B cell (primary cell): ENCODE measurements at regions of chr11 and their contacts with region 1.

Region 1: GRCh38 chr11:2305140-2305840 is 3.5 kb downstream of the TSPAN32 start:
- DNase-seq: peak; percentile 85
- ATAC-seq: peak; percentile 56
- H3K4me3 ChIP-seq: no peak overlapping the region
- H3K4me3 Mint-ChIP-seq: peak overlapping the region; percentile 59
- H3K27ac ChIP-seq: peak overlapping the region in 1 of 2 donors; percentile 40
- H3K27ac Mint-ChIP-seq: peak overlapping the region; percentile 67
- H3K4me1 ChIP-seq: peaks cover 59 to 62% of the 10 kb centered on the region in 2 donors
- H3K4me1 Mint-ChIP-seq: peaks cover 51% of the 10 kb centered on the region
- H3K27me3 ChIP-seq: no peaks in the 10 kb centered on the region
- H3K27me3 Mint-ChIP-seq: no peaks in the 10 kb centered on the region
- CTCF ChIP-seq: peak; percentile 93

Region 2: DNA sequence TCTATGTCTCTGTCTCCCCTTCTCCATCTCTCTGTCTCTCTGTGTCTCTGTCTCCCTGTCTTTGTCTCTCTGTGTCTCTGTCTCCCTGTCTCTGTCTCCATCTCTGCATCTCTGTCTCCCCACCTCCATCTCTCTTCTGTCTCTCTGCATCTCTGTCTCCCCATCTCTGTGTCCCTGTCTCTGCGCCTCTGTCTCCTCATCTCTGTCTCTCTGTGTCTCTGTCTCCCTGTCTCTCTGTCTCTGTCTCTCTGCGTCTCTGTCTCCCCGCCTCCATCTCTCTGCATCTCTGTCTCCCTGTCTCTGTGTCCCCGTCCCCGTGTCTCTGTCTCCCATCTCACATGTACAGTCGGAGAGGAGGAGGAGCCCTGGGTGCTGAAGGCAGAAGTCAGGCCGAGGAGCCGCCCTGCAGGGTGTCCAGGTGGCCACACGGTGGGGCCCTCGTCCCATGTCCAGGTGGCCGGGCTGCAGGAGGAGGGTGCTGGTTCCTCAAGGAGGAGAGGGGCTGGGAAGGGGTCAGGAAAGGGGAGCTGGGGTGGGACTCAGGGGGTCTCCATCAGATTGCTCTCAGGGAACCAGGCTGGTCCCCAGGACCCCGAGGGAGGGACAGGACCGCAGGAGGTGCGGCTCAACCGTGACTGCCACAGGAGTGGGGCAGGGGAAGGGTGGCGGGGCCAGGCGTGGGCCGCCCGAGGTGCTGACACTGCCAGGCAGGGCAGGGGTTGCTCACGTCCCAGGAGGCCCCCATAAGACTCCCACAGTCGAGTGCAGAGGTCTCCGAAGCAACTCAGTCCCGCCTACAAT is 108.1 kb before region 1 on chr11:
- CTCF ChIA-PET with region 1: interaction called, 68 read pairs
- POLR2A ChIA-PET with region 1: interaction called, 3 read pairs
- intact Hi-C with region 1: loop called (anchors 1 kb)
- DNase-seq: peak; percentile 79
- ATAC-seq: peak; percentile 92
- H3K4me3 ChIP-seq: no peak overlapping the region
- H3K4me3 Mint-ChIP-seq: no peak overlapping the region
- H3K27ac ChIP-seq: no peak overlapping the region
- H3K27ac Mint-ChIP-seq: peak overlapping the region; percentile 34
- H3K4me1 ChIP-seq: peaks cover 0 to 18% of the 10 kb centered on the region in 2 donors
- H3K4me1 Mint-ChIP-seq: peaks cover 7% of the 10 kb centered on the region
- H3K27me3 ChIP-seq: peaks cover 0 to 11% (median 2%) of the 10 kb centered on the region in 4 experiments
- H3K27me3 Mint-ChIP-seq: peaks cover 14% of the 10 kb centered on the region
- CTCF ChIP-seq: peak; percentile 78

Region 3: GRCh38 chr11:2342981-2343380 is 37.7 kb after region 1 on chr11:
- CTCF ChIA-PET with region 1: interaction called, 15 read pairs
- POLR2A ChIA-PET with region 1: no interaction called
- intact Hi-C with region 1: no loop called
- DNase-seq: no peak
- ATAC-seq: no peak
- H3K4me3 ChIP-seq: no peak overlapping the region
- H3K4me3 Mint-ChIP-seq: no peak overlapping the region
- H3K27ac ChIP-seq: no peak overlapping the region
- H3K27ac Mint-ChIP-seq: no peak overlapping the region
- H3K4me1 ChIP-seq: no peaks in the 10 kb centered on the region
- H3K4me1 Mint-ChIP-seq: peaks cover 4% of the 10 kb centered on the region
- H3K27me3 ChIP-seq: no peaks in the 10 kb centered on the region
- H3K27me3 Mint-ChIP-seq: no peaks in the 10 kb centered on the region
- CTCF ChIP-seq: no peak

Region 4: DNA sequence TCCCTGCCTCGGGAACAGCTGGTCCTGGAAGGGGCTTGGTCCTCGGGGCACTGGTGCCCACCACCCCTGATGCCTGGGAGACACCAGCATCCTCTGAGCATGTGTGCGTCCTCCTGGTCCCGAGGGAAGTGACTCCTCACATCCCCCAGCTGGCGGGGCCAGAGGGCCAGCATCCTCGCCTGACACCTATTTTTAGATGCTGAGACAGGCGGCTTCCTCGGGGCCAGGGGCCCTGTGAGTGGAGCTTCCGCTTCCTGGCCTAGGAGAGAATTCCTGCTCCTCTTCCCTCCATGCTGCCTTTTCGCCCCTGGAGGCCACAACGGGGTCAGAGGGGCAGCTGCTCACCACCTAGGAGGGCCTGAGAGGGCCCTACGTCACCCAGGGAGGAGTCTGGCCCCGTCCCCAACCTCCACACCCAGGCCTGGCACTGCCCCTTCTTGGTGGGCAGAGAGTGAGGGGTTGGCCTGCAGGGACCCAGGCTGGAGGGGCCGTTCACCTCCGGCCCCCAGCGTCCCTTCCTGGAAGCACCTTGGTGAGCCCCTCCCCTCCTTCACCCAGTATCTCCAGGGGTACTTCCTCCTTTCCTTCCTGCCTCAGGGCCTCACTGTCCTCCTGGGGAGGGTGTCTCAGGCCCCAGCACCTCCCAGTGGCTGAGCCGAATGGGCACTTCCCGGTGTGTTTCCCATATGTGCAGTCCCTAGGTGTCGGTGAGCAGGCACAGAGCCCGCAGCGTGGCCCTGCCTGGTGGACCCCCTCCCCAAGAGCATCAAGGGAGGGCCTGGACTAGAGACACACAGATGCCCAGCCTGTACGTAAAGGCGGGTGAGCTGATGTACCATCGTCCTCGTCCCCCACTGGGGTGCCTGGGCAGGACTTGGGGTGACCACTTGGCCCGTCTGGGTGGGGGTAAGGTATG is 77.9 kb after region 1 on chr11:
- CTCF ChIA-PET with region 1: interaction called, 59 read pairs
- POLR2A ChIA-PET with region 1: interaction called, 11 read pairs
- intact Hi-C with region 1: no loop called
- DNase-seq: peak; percentile 65
- ATAC-seq: no peak
- H3K4me3 ChIP-seq: peak overlapping the region in 2 of 5 experiments; percentile 5 to 7
- H3K4me3 Mint-ChIP-seq: peak overlapping the region; percentile 80
- H3K27ac ChIP-seq: peak overlapping the region; percentile 83 to 86
- H3K27ac Mint-ChIP-seq: peak overlapping the region; percentile 94
- H3K4me1 ChIP-seq: peaks cover 89 to 97% of the 10 kb centered on the region in 2 donors
- H3K4me1 Mint-ChIP-seq: peaks cover 89% of the 10 kb centered on the region
- H3K27me3 ChIP-seq: no peaks in the 10 kb centered on the region
- H3K27me3 Mint-ChIP-seq: no peaks in the 10 kb centered on the region
- CTCF ChIP-seq: no peak

Region 5: GRCh38 chr11:2400069-2400760 is 94.9 kb after region 1 on chr11 and contains the start of gene TSSC4:
- CTCF ChIA-PET with region 1: interaction called, 78 read pairs
- POLR2A ChIA-PET with region 1: interaction called, 10 read pairs
- intact Hi-C with region 1: loop called (anchors 1 kb)
- DNase-seq: peak; percentile 100
- ATAC-seq: peak; percentile 81
- H3K4me3 ChIP-seq: peak within 1 kb of the TSS; percentile 87 to 100 (median 95)
- H3K4me3 Mint-ChIP-seq: peak within 1 kb of the TSS; percentile 90
- H3K27ac ChIP-seq: peak within 1 kb of the TSS; percentile 91 to 93
- H3K27ac Mint-ChIP-seq: peak within 1 kb of the TSS; percentile 98
- H3K4me1 ChIP-seq: peaks cover 26 to 40% of the 10 kb centered on the region in 2 donors
- H3K4me1 Mint-ChIP-seq: peaks cover 25% of the 10 kb centered on the region
- H3K27me3 ChIP-seq: no peaks in the 10 kb centered on the region
- H3K27me3 Mint-ChIP-seq: no peaks in the 10 kb centered on the region
- CTCF ChIP-seq: peak; percentile 94
- total RNA-seq, gene TSSC4: 57.5 and 59.5 TPM in 2 replicates